ENCODE measurements at regions of chr2 and their contacts with region 1.

Region 1: DNA sequence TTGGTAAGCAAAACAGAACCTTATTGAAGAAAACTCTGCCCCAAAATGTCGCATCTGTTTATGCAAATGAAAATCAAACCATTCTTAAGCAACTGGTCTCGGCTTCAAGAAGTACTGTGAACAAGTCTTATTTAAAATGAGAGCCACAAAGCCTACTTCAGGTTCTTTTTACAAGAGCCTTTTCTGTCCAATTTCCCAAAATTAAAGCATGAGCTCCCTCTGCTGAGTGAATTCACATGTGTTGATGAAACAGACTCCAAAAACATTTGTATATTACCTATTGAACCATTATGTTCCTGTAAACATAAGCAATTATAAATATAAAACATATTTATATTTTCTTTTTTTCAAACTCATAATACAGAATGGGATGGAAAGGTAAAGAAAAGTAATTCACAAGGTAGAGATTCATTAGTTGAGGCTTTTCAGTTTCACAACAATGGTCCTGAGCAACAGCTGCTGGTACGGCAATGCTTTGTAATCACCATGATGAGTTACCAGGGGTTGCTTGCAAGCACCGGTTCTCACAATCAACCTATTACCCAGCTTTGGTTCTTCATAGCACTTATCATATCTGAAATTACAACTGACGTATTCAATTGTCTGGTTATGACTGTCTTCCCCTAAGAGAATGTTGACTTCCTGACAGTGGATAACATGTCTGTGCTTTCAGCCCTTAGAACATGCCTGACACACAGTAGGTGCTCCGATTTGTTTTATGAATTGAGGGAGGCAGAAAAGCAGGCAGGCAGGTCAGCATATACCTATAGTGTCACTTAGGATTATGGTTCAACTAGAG is 108.4 kb upstream of the BZW1 start:
- DNase-seq: no peak
- ATAC-seq: peak; percentile 49

Region 2: DNA sequence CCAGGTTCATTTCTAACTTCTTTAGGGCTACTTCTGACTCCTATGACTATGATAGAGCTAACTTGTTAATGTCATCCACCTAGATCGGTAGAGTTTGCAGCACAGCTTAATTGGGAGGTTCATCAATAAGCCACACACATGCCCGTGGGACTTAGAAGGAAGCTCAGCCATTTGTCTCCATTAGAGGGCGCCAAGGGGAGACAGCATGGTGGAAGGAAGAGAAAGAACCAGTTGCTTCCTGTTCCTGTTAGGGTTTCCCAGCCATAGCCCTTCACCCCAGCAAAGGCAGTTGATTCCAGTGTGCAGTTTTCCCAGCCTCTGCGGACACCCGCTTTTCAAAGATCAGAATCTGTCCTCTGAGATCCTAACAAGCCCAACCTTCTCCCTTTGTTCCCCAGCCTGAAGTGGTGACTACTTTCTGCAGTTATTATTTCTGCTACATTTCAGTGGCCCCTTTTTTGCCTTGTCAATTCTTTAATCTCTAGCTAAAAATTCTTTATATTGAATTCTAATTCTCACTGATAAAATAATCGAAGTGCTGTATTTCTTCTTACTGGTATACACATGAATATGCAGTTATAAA is 717.6 kb before region 1 on chr2:
- intact Hi-C with region 1: loop called in 1 of 2 experiments (anchors 10 kb)
- DNase-seq: peak; percentile 70 to 79
- ATAC-seq: peak; percentile 92

Region 3: DNA sequence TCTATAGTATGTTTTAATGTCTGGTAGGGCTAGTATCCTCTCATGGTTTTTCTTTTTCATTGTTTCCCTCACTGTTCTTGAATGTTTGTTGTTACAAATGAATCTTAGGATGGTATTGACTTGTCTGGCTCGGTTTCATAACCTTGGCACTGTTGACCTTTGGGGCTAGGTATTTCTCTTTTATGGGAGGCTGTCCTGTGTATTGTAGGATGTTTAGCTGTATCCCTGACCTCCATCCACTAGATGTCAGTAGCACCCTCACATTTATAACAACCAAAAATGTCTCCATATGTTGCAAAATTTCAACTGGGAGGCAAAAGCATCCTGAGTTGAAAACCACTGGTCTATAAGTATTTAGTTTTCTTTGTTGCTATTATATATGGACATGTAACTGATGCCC is 124.5 kb before region 1 on chr2:
- intact Hi-C with region 1: loop called in 1 of 2 experiments (anchors 5 kb)
- DNase-seq: no peak
- ATAC-seq: peak; percentile 95

Measured in left colon (tissue), 2 donors.